Posterior vena cava (tissue), 2 donors: ENCODE measurements at regions of chr3 and their contacts with region 1.

Region 1: GRCh38 chr3:145882436-145882835 is 278.5 kb downstream of the PLOD2 start:
- DNase-seq: no peak

Region 2: DNA sequence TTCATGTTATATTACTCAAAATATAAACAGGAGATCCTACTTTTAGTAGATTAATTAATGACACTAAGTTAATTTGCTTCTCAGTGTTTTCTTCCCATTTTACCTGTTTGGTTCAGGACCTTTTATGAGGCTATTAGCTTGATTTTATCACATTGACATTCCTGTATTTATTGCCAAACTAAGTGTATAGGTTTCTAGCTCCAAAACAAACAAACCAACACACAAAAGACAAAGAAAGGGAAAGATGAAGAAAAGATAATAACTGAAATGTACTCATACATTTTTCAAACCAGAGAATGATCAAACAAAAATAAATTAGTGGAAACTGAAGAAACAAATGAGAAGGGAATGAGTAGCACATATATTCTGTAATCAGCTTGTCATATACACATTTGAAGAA is 118.0 kb after region 1 on chr3:
- intact Hi-C with region 1: loop called in 1 of 2 experiments (anchors 10 kb)
- DNase-seq: no peak